CD14-positive monocyte (primary cell): ENCODE measurements at regions of chr19 and their contacts with region 1.

Region 1: DNA sequence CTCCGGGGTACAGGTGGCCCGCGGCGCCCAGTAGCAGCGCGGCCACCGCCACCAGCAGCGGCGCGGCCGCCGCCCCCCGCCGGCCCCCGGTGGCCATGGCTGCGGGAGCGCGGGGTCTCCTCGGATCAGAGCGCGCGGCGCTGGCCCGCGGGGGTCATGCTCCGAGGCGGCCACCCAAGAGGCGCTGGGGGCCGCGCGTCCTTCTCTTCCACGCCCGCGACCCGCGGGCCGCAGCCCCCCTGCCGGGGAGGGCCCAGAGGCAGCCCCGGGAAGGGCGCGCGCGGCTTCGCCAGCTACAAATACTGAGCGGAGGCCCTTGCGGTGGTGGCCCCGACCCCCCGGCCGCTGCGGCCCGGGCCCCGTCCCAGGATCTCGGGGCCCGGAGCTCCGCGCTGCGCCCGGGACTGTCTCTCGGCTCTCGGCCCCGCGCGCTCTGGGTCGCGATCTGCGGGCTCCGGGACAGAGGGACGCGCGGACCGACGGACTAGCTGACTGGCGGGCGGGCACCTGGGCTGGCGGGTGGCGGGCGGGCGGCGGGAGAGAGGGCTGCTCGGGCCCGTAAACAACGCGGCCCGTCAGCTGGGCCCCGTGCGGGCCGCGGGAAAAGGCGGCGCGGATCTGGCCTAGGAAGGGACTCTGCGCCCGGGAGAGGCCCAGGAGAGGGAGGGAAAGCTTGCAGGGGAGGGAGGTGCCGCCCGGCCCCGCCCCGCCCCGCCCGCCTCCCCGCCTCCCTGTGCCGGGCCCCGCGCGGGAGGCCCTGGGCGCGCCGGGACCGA is at the start of gene INSR:
- DNase-seq: peak; percentile 82 to 88 (median 83)
- H3K4me3 ChIP-seq: peak within 1 kb of the TSS; percentile 77 to 92 (median 81)
- H3K4me3 Mint-ChIP-seq: peak within 1 kb of the TSS; percentile 83 to 91
- H3K27ac ChIP-seq: peak within 1 kb of the TSS; percentile 53 to 80
- H3K27ac Mint-ChIP-seq: peak within 1 kb of the TSS; percentile 60 to 92 (median 83)
- H3K4me1 ChIP-seq: peaks cover 16 to 18% of the 10 kb centered on the region in 2 donors
- H3K4me1 Mint-ChIP-seq: peaks cover 38% of the 10 kb centered on the region
- H3K27me3 ChIP-seq: no peaks in the 10 kb centered on the region
- H3K27me3 Mint-ChIP-seq: peaks cover 0 to 2% (median 0%) of the 10 kb centered on the region in 3 donors
- CTCF ChIP-seq: no peak
- polyA plus RNA-seq, gene INSR: 2.9 to 12.4 (median 3.4) TPM

Region 2: DNA sequence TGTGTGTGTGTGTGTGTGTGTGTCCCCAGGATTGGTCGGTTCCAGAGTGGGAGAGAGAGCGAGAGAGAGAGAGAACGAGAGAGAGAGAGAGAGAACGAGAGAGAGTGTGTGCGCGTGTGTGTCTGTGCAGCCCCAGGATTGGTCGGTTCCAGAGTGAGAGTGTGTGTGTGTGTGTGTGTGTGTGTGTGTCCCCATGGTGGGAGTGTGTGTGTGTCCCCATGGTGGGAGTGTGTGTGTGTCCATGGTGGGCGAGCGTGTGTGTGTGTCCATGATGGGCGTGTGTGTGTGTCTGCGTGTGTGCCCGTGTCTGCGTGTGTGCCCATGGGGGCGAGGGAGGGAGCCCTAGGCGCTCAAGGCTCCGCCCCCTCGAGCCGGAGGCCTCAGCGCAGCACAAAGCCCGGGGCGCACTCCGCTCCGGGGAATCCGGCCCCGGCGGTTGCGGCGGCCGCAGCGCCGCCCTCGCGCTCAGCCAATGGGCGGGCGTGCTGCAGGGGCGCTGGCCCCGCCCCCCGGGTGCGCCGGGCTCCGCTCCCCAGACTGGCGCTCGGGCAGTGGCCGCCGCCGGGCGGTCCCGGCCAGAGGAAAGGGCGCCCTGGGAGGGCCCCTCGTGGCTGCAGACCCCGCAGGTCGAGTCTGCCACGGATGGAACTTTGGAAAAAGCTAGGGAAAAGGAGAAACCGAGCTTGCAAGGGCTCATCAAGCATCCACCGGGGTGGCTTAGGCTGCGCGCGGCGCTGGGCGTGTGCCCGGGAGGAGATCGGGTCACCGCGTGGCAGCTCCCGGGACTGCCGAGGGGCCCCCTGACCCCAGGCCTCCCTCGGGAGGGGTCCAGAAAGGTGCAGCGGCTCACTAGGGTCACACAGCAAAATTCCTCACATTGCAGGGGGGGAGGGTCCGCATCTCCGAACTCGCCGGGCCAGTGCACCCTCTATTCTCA is 96.0 kb before region 1 on chr19:
- intact Hi-C with region 1: loop called (anchors 1 to 2 kb)
- DNase-seq: peak; percentile 91 to 94 (median 92)
- H3K4me3 ChIP-seq: peak overlapping the region; percentile 69 to 88 (median 70)
- H3K4me3 Mint-ChIP-seq: peak overlapping the region; percentile 87 to 98
- H3K27ac ChIP-seq: peak overlapping the region; percentile 84 to 87
- H3K27ac Mint-ChIP-seq: peak overlapping the region; percentile 88 to 99 (median 96)
- H3K4me1 ChIP-seq: peaks cover 13 to 21% of the 10 kb centered on the region in 2 donors
- H3K4me1 Mint-ChIP-seq: peaks cover 22% of the 10 kb centered on the region
- H3K27me3 ChIP-seq: peaks cover 0 to 2% of the 10 kb centered on the region in 2 donors
- H3K27me3 Mint-ChIP-seq: peaks cover 0 to 11% (median 6%) of the 10 kb centered on the region in 3 donors
- CTCF ChIP-seq: peak; percentile 45

Region 3: GRCh38 chr19:7242601-7243258 is 51.3 kb before region 1 on chr19:
- intact Hi-C with region 1: loop called in 1 of 2 experiments (anchors 5 kb)
- DNase-seq: peak; percentile 64 to 85 (median 65)
- H3K4me3 ChIP-seq: no peak overlapping the region
- H3K4me3 Mint-ChIP-seq: no peak overlapping the region
- H3K27ac ChIP-seq: peak overlapping the region in 1 of 2 donors; percentile 74
- H3K27ac Mint-ChIP-seq: peak overlapping the region; percentile 67 to 91 (median 77)
- H3K4me1 ChIP-seq: peaks cover 7 to 10% of the 10 kb centered on the region in 2 donors
- H3K4me1 Mint-ChIP-seq: peaks cover 27% of the 10 kb centered on the region
- H3K27me3 ChIP-seq: no peaks in the 10 kb centered on the region
- H3K27me3 Mint-ChIP-seq: no peaks in the 10 kb centered on the region
- CTCF ChIP-seq: no peak